ENCODE measurements at regions of chr12 and their contacts with region 1.

Region 1: GRCh38 chr12:125240717-125241116 is 175.5 kb downstream of the AACS start:
- DNase-seq: no peak
- H3K4me3 ChIP-seq: no peak overlapping the region
- H3K27ac ChIP-seq: no peak overlapping the region
- H3K4me1 ChIP-seq: no peaks in the 10 kb centered on the region
- CTCF ChIP-seq: no peak

Region 2: DNA sequence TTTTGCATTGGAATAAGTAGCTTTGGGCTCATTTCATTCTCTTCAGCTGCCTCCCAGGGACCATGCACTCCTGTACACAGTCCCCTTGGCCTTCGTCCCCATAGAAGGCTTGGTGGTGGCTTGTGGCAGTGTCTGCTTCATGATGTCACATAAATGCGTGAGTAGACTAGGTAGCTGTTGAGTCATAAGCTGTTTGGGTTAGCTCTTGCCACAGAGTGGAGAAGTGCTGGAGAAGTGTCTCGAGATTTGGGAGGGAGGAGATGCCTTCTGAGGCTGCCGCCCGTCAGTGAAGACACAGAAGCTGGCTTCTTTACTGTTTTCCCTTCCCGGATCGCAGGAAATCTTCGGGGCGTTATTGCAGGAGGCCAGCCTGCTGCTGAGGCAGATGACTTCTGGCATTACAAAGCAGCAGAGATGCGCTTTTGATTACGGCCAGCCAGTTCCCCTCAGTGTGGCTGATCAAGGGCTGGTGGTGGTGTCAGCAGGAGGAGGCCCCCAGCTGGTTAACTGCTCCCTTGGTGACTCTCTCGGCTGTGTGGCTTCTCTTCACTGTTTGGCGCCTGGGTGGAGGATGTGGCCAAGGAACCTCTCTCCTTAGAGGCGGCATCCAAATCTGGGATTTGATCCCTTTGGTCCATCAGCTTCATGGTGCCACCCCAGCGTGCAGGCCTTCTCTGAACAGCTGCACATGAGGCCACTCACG is 107.9 kb before region 1 on chr12:
- CTCF ChIA-PET with region 1: no interaction called
- POLR2A ChIA-PET with region 1: no interaction called
- intact Hi-C with region 1: no loop called
- DNase-seq: no peak
- H3K4me3 ChIP-seq: no peak overlapping the region
- H3K27ac ChIP-seq: no peak overlapping the region
- H3K4me1 ChIP-seq: no peaks in the 10 kb centered on the region
- CTCF ChIP-seq: no peak

Region 3: DNA sequence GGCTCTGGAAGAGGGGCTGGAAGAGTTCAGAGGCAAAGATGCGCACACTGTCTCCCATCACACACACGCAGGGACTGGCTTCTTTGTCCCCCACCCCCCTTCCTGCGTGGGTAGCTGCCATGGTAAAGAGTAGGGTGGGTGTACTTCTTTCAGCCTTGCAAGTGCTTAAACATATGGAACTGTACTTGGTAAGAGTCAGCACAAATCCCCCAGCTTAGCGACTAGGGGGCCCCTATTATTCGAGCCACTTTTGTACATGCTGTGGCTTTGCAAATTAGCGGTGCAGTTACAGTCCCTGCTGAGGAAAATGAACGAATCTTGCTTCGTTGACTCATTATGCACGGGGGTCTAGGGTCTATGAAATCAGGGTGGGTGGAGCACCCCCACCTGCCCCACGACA is 51.7 kb before region 1 on chr12:
- CTCF ChIA-PET with region 1: no interaction called
- POLR2A ChIA-PET with region 1: no interaction called
- intact Hi-C with region 1: no loop called
- DNase-seq: peak; percentile 39
- H3K4me3 ChIP-seq: peak overlapping the region; percentile 33
- H3K27ac ChIP-seq: no peak overlapping the region
- H3K4me1 ChIP-seq: peaks cover 79% of the 10 kb centered on the region
- CTCF ChIP-seq: no peak

Region 4: DNA sequence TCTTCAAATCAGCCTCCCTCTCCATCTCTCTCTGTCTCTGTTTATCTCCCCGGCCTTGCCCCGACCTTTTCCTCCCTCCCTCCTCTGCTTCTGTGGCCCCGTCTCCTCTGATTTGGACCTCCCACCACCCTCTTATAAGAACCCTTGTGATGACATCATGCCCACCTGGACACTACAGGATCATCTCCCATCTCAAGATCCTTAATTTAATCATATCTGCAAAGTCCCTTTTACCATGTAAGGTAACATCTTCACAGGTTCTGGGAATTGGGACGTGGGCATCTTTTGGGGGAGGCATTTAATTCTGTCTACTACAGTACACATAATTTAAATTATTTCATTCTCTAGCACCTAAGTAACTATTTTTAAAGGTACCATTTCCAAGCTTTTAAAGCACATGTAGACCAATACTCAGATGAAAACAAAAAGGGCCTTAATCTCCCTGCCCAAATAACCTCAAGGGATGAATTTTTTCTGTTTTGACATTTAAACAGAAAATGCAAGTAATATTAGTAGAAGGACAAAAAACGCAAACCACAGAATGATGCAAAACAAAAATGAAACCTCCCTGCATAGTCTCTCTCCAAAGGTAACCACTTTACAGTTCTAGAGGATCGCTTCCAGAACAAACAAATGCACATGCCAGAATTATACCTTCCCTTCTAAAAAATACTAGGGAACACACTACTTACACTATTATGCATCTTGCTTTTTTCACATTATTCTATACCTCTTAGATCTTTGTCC is 46.6 kb after region 1 on chr12:
- CTCF ChIA-PET with region 1: no interaction called
- POLR2A ChIA-PET with region 1: no interaction called
- intact Hi-C with region 1: no loop called
- DNase-seq: no peak
- H3K4me3 ChIP-seq: no peak overlapping the region
- H3K27ac ChIP-seq: no peak overlapping the region
- H3K4me1 ChIP-seq: no peaks in the 10 kb centered on the region
- CTCF ChIP-seq: no peak

Region 5: DNA sequence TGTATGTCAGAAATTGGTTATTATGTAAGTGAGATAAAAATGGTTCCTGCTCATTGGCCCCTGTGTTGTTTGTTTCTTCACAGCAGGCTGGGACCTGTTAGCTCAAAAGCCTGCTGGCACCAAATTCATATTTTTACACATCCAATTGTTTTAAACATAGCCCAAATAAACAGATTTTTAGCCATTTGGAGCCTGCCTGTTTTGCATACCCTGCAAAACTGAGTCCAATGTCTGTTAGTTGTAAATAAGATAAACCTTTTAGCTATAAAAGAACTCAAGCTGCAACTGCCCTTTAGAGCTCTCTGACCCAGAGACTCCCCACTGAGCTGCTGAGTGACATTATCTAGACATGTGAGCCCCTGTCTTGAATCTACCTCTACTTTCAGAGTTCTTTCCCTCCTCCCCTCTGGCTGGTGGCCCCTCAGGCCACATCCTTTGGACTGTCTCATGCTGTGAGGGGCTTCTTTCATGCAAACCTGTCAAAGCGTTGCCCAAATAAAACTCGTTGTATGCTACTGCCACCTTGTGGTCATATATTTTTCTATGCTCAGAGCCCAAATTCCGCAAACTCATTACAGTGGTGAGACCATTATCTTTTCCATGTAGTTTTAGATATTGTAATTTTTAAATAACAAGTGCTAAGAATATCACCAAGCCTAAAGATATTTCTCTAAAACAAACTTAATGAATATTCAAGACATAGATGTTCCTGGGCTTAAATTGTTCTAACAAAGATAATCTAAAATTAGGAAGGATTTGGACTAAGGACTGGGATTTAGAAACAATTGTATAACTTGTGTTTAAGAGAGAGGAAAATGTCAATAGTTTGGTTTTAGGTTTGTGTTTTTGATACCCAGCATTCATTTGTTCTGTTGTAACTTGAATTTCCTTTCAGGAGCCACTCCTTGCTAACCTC is 162.4 kb after region 1 on chr12:
- CTCF ChIA-PET with region 1: interaction called, 5 read pairs
- POLR2A ChIA-PET with region 1: no interaction called
- intact Hi-C with region 1: loop called (anchors 1 kb)
- DNase-seq: peak; percentile 81
- H3K4me3 ChIP-seq: no peak overlapping the region
- H3K27ac ChIP-seq: no peak overlapping the region
- H3K4me1 ChIP-seq: peaks cover 44% of the 10 kb centered on the region
- CTCF ChIP-seq: peak; percentile 95

Region 6: DNA sequence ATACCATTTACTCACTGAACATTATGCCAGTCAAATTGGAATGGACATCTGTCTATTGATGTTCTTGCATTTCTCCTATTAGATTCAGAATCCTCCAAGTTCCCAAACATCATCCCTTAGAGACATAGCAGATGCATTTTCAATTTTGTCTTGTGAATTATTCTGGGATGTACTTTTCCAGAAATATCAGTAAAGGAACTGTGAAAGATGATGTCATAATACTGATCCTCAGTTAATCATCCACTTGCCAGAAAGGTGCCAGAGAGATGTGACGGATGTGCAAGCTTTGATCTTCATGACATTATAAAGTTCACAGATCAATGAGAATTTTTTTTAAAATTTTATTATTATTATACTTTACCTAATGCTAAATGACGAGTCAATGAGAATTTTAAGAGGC is 591.6 kb after region 1 on chr12:
- CTCF ChIA-PET with region 1: no interaction called
- POLR2A ChIA-PET with region 1: no interaction called
- intact Hi-C with region 1: no loop called
- DNase-seq: no peak
- H3K4me3 ChIP-seq: no peak overlapping the region
- H3K27ac ChIP-seq: no peak overlapping the region
- H3K4me1 ChIP-seq: no peaks in the 10 kb centered on the region
- CTCF ChIP-seq: no peak